HEK293 (cell line): ENCODE measurements at regions of chr6 and their contacts with region 1.

Region 1: GRCh38 chr6:13908955-13909381 is 15.8 kb upstream of the RNF182 start:
- H3K4me3 ChIP-seq: no peak overlapping the region
- H3K27ac ChIP-seq: no peak overlapping the region
- H3K4me1 ChIP-seq: peaks cover 3% of the 10 kb centered on the region; the same call in 1 of the 2 replicates
- CTCF ChIP-seq: peak; percentile 68; the same call in 1 of the 2 replicates

Region 2: GRCh38 chr6:13873285-13874190 is 35.4 kb before region 1 on chr6:
- CTCF ChIA-PET with region 1: interaction called, 20 read pairs
- POLR2A ChIA-PET with region 1: no interaction called
- H3K4me3 ChIP-seq: peak overlapping the region; percentile 25
- H3K27ac ChIP-seq: no peak overlapping the region; the same call in 1 of the 2 replicates
- H3K4me1 ChIP-seq: no peaks in the 10 kb centered on the region
- CTCF ChIP-seq: peak; percentile 99

Region 3: DNA sequence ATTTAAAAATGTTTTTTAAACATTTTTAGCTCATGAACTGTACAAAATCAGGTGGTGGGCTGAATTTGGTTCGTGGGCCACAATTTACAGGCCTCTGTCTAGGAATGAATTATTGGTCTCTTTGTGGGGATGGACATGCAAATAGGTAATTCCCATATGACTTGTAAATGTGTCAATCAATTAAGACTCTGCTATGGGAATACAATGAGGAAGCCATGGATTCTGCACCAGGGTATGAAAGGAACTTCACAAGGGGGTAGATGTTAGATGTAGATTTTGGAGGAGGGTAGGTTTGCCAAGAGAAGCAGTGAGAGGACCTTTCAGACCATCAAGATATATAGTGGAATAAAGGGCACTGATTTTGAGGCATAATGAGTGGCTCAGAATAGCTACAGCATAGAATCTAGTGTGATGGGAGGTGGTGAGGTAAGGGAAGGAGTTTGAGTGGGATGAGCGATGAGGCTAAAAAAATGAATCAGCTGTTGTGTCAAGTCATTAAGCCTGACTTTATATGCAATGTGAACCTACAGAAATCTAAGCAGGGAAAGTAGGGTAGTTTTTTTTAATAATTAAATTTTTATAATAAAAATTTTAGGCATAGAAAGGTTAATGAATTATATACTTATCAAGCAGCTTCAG is 16.8 kb before region 1 on chr6:
- CTCF ChIA-PET with region 1: interaction called, 15 read pairs
- POLR2A ChIA-PET with region 1: no interaction called
- H3K4me3 ChIP-seq: no peak overlapping the region
- H3K27ac ChIP-seq: no peak overlapping the region
- H3K4me1 ChIP-seq: no peaks in the 10 kb centered on the region
- CTCF ChIP-seq: no peak

Region 4: DNA sequence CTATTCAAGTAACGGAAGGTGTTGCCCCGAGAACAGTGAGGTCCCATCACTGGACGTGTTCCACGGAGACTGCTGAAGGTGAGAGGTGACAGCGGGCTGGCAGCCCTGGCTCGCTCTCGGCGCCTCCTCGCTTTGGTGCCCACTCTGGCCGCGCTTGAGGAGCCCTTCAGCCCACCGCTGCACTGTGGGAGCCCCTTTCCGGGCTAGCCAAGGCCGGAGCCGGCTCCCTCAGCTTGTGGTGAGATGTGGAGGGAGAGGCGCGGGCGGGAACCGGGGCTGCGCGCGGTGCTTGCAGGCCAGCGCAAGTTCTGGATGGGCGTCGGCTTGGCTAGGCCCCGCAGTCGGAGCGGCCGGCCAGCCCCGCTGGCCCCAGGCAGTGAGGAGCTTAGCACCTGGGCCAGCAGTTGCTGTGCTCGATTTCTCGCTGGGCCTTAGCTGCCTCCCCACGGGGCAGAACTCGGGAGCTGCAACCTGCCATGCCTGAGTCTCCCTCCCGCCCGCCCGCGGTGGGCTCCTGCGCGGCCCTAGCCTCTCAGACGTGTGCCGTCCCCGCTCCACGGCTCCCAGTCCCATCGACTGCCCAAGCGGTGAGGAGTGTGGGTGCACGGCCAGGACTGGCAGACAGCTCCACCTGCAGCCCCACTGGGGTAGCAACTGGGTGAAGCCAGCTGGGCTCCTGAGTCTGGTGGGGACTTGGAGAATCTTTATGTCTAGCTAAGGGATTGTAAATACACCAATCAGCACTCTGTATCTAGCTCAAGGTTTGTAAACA is 93.4 kb after region 1 on chr6:
- CTCF ChIA-PET with region 1: interaction called, 11 read pairs
- POLR2A ChIA-PET with region 1: no interaction called
- H3K4me3 ChIP-seq: no peak overlapping the region
- H3K27ac ChIP-seq: no peak overlapping the region
- H3K4me1 ChIP-seq: no peaks in the 10 kb centered on the region
- CTCF ChIP-seq: no peak

Region 5: DNA sequence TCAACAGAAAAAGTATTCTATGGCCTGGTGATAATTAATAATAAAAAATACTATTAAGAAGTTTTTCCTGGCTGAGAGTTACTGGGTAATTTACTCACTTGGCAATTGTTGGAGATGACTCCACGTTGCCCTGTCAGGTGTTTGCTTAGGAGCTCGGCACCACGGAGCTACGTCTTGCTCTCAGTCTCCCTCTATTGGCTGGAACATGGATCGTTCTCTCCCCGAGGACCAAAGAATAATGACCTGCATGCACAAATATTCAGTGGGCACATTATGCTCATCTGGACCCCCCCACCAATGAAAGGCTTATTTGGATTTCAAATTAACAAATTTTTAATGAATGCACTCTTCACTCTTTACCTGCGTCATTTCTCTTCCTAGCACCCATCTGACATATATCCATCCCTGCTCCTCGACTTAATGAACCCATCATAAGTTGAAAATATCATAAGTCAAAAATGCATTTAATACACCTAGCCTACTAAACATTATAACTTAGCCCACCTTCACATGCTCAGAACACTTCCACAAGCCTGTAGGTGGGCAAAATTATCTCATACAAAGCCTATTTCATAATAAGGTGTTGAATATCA is 137.6 kb after region 1 on chr6:
- CTCF ChIA-PET with region 1: interaction called, 152 read pairs
- POLR2A ChIA-PET with region 1: no interaction called
- H3K4me3 ChIP-seq: no peak overlapping the region
- H3K27ac ChIP-seq: no peak overlapping the region
- H3K4me1 ChIP-seq: no peaks in the 10 kb centered on the region
- CTCF ChIP-seq: peak; percentile 26; the same call in 1 of the 2 replicates

Region 6: GRCh38 chr6:14066782-14067406 is 157.9 kb after region 1 on chr6:
- CTCF ChIA-PET with region 1: interaction called, 353 read pairs
- POLR2A ChIA-PET with region 1: no interaction called
- H3K4me3 ChIP-seq: no peak overlapping the region
- H3K27ac ChIP-seq: no peak overlapping the region
- H3K4me1 ChIP-seq: no peaks in the 10 kb centered on the region
- CTCF ChIP-seq: peak; percentile 53

Region 7: GRCh38 chr6:14144678-14145113 is 235.7 kb after region 1 on chr6:
- CTCF ChIA-PET with region 1: interaction called, 45 read pairs
- POLR2A ChIA-PET with region 1: no interaction called
- H3K4me3 ChIP-seq: no peak overlapping the region
- H3K27ac ChIP-seq: no peak overlapping the region
- H3K4me1 ChIP-seq: peaks cover 3% of the 10 kb centered on the region
- CTCF ChIP-seq: peak; percentile 87; the same call in 1 of the 2 replicates